PC-9 (cell line): ENCODE measurements at regions of chr5 and their contacts with region 1.

Region 1: DNA sequence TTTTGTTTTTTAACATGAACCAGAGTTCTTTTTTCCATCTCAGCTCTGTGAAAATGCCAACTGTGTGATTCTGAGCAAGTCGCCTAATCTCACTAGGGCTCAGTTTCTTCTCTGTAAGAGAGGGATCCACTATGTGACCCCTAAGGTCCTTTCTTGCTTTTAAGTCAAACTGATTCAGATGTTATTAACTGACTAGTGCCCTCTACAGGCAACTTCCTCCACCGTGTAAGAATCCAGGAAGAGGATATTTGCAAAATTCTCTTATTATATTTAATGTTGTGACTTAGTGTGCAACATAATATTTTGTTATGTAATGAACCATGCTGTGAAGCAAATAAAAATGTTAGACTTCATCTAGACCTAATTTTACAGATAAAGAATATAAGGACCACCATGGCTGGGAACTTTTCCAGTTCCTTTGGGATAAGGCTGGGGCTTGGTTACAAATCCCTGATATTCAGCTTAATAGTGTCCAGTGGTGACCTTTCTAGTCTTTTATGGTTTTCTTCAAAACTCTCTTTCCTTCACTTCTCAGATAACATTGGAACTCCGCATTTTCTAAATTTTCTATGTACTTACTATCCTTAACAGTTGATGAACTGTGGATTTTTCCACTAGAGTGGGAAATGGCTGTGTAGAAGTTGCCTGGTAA is 244.7 kb downstream of the PIK3R1 start:
- DNase-seq: peak; percentile 13 to 57
- H3K4me3 ChIP-seq: no peak overlapping the region
- H3K27ac ChIP-seq: no peak overlapping the region
- H3K4me1 ChIP-seq: peaks cover 36% of the 10 kb centered on the region
- H3K27me3 ChIP-seq: no peaks in the 10 kb centered on the region
- CTCF ChIP-seq: peak; percentile 77

Region 2: DNA sequence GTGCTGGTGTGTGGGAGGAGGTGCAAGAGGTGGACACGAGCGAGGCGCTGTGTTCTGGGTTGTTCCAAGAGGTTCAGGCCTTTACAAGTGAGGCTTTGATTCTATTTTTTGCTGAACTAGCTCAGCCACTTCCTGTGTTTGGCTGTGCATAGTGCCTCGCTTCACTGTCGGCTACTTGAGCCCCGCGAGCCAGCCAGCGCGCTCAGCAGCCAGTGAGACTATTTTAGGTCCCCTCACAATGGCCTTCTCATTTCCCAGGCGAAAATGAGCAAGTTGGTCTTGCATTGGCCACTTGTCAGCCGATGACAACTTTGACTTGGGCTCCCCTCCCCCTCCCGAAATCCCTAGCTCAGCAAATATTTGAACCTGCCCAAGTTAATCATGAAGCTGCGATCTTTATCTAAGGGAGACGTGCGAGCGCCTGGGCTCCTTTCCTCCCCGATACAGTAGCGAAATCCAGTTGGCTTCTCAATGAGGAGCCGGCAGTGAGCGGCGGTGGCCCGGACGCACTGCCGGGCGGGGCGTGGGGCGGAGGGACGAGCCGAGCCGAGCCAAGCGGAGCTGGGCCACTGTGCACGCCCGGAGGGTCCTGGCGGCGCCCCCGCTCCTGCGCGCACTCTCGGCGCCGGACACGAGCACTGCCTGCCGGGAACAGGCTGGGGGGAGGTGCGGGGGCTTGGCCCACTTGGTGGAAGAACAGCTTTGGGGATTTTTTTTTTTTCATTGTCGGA is 172.1 kb before region 1 on chr5:
- CTCF ChIA-PET with region 1: interaction called, 3 read pairs
- POLR2A ChIA-PET with region 1: interaction called, 3 read pairs
- intact Hi-C with region 1: loop called (anchors 1 kb)
- DNase-seq: peak in 1 of 2 experiments; percentile 33
- H3K4me3 ChIP-seq: no peak overlapping the region
- H3K27ac ChIP-seq: no peak overlapping the region
- H3K4me1 ChIP-seq: peaks cover 4% of the 10 kb centered on the region; the same call in 1 of the 2 replicates
- H3K27me3 ChIP-seq: no peaks in the 10 kb centered on the region
- CTCF ChIP-seq: no peak

Region 3: GRCh38 chr5:68396722-68397121 is 63.6 kb before region 1 on chr5:
- CTCF ChIA-PET with region 1: no interaction called
- POLR2A ChIA-PET with region 1: no interaction called
- intact Hi-C with region 1: loop called (anchors 5 kb)
- DNase-seq: peak; percentile 32 to 91
- H3K4me3 ChIP-seq: peak overlapping the region; percentile 31; the same call in 1 of the 2 replicates
- H3K27ac ChIP-seq: peak overlapping the region; percentile 75
- H3K4me1 ChIP-seq: peaks cover 29% of the 10 kb centered on the region
- H3K27me3 ChIP-seq: no peaks in the 10 kb centered on the region
- CTCF ChIP-seq: no peak

Region 4: GRCh38 chr5:68548959-68549687 is 88.8 kb after region 1 on chr5:
- CTCF ChIA-PET with region 1: no interaction called
- POLR2A ChIA-PET with region 1: no interaction called
- intact Hi-C with region 1: loop called (anchors 1 kb)
- DNase-seq: peak; percentile 78 to 95
- H3K4me3 ChIP-seq: no peak overlapping the region
- H3K27ac ChIP-seq: peak overlapping the region; percentile 35
- H3K4me1 ChIP-seq: peaks cover 29% of the 10 kb centered on the region
- H3K27me3 ChIP-seq: no peaks in the 10 kb centered on the region
- CTCF ChIP-seq: no peak

Region 5: GRCh38 chr5:68962757-68963484 is 502.6 kb after region 1 on chr5:
- CTCF ChIA-PET with region 1: no interaction called
- POLR2A ChIA-PET with region 1: no interaction called
- intact Hi-C with region 1: loop called (anchors 5 kb)
- DNase-seq: peak; percentile 42 to 62
- H3K4me3 ChIP-seq: no peak overlapping the region
- H3K27ac ChIP-seq: no peak overlapping the region
- H3K4me1 ChIP-seq: no peaks in the 10 kb centered on the region
- H3K27me3 ChIP-seq: no peaks in the 10 kb centered on the region
- CTCF ChIP-seq: peak; percentile 83